Dendritic cell treated with granulocyte-macrophage colony-stimulating factor and Interleukin-4, amounts not matched to agents 40 ng/mL and 50 ng/mL, for 4 days (primary cell): ENCODE measurements at regions of chr2 and their contacts with region 1.

Region 1: GRCh38 chr2:227515742-227516141 is 43.8 kb downstream of the AGFG1 start:
- H3K4me3 Mint-ChIP-seq: no peak overlapping the region
- H3K27ac Mint-ChIP-seq: no peak overlapping the region
- H3K4me1 Mint-ChIP-seq: peaks cover 70% of the 10 kb centered on the region
- H3K27me3 Mint-ChIP-seq: no peaks in the 10 kb centered on the region

Region 2: DNA sequence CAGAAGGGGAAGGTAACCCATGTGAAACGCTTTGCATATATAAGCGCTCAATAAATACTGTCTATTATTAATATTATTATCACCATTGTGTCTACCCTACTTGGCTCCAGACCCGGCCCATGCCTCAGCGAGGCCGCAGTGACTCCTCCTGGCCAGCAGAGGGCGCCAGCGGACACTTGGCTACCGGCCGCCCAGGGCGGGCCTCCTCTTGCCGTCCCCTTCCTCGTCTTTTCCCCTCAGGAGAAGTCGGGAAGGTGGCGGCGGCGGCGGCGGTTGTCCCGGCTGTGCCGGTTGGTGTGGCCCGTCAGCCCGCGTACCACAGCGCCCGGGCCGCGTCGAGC is 43.8 kb before region 1 on chr2 and contains the start of gene AGFG1:
- intact Hi-C with region 1: loop called (anchors 5 kb)
- H3K4me3 Mint-ChIP-seq: peak within 1 kb of the TSS; percentile 76
- H3K27ac Mint-ChIP-seq: peak within 1 kb of the TSS; percentile 64
- H3K4me1 Mint-ChIP-seq: peaks cover 13% of the 10 kb centered on the region
- H3K27me3 Mint-ChIP-seq: no peaks in the 10 kb centered on the region